PC-3 (cell line): ENCODE measurements at regions of chr13 and their contacts with region 1.

Region 1: GRCh38 chr13:30204564-30204963 is 102.8 kb downstream of the KATNAL1 start:
- DNase-seq: no peak
- ATAC-seq: no peak
- H3K4me3 ChIP-seq: no peak overlapping the region
- H3K27ac ChIP-seq: no peak overlapping the region
- H3K4me1 ChIP-seq: no peaks in the 10 kb centered on the region
- H3K27me3 ChIP-seq: no peaks in the 10 kb centered on the region
- CTCF ChIP-seq: no peak

Region 2: DNA sequence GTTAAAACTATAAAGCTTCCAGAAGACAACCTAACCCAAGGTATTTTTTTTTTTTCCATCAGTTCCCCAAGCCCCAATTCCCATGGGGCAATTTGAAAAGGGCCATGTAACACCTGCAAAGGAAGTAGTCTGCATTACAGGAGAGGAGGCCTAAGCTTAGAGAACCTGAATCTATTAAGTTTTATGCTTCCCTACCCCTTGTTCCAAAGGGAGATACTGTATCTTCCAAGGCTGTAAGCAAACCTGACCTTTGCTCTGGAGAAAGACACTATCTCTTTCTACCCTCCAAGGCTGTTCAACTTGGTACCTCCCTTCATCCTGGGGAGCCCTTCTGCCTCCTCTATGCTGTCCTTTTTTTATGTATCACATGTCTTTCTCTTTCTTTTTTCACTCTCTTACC is 87.8 kb after region 1 on chr13:
- CTCF ChIA-PET with region 1: no interaction called
- POLR2A ChIA-PET with region 1: no interaction called
- intact Hi-C with region 1: no loop called
- DNase-seq: no peak
- ATAC-seq: no peak
- H3K4me3 ChIP-seq: no peak overlapping the region
- H3K27ac ChIP-seq: no peak overlapping the region
- H3K4me1 ChIP-seq: no peaks in the 10 kb centered on the region
- H3K27me3 ChIP-seq: no peaks in the 10 kb centered on the region
- CTCF ChIP-seq: no peak

Region 3: DNA sequence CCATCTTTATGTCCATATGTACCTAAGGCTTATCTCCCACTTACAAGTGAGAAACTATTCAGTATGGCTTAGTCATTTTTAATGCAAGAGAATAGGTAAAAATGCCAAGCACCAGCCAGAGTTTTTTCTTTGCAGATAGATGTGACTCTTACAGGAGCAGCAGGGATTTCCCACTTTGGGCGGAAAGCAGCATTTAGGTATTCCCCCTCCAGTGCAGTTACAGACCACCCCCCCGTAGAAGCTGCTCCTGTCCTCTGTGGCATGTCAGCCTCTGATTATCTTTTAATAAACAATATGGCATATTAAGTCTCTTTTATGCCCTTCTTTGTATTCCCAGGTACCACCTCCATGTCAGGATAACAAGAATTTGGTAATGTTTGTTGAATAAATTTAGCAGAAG is 388.4 kb after region 1 on chr13:
- CTCF ChIA-PET with region 1: no interaction called
- POLR2A ChIA-PET with region 1: no interaction called
- intact Hi-C with region 1: loop called (anchors 5 kb)
- DNase-seq: no peak
- ATAC-seq: no peak
- H3K4me3 ChIP-seq: no peak overlapping the region
- H3K27ac ChIP-seq: no peak overlapping the region
- H3K4me1 ChIP-seq: no peaks in the 10 kb centered on the region
- H3K27me3 ChIP-seq: no peaks in the 10 kb centered on the region
- CTCF ChIP-seq: no peak